Activated CD8-positive, alpha-beta memory T cell treated with anti-CD3 and anti-CD28 coated beads, Interleukin-2, amount 10 ng/mL, durations not matched to agents 7 days and 5 days (primary cell): ENCODE measurements at regions of chr19 and their contacts with region 1.

Region 1: GRCh38 chr19:15101479-15102082 is 5.6 kb upstream of the SYDE1 start:
- DNase-seq: peak; percentile 72
- ATAC-seq: peak; percentile 64
- H3K4me3 Mint-ChIP-seq: no peak overlapping the region
- H3K27ac Mint-ChIP-seq: no peak overlapping the region
- H3K4me1 Mint-ChIP-seq: peaks cover under 1% of the 10 kb centered on the region
- H3K27me3 Mint-ChIP-seq: peaks cover 13% of the 10 kb centered on the region

Region 2: GRCh38 chr19:15154002-15154612 is 52.5 kb after region 1 on chr19:
- CTCF ChIA-PET with region 1: interaction called, 22 read pairs
- DNase-seq: peak; percentile 55
- ATAC-seq: no peak
- H3K4me3 Mint-ChIP-seq: no peak overlapping the region
- H3K27ac Mint-ChIP-seq: no peak overlapping the region
- H3K4me1 Mint-ChIP-seq: no peaks in the 10 kb centered on the region
- H3K27me3 Mint-ChIP-seq: peaks cover 8% of the 10 kb centered on the region

Region 3: GRCh38 chr19:15234043-15234873 is 132.7 kb after region 1 on chr19:
- CTCF ChIA-PET with region 1: no interaction called
- DNase-seq: no peak
- ATAC-seq: no peak
- H3K4me3 Mint-ChIP-seq: no peak overlapping the region
- H3K27ac Mint-ChIP-seq: no peak overlapping the region
- H3K4me1 Mint-ChIP-seq: peaks cover 12% of the 10 kb centered on the region
- H3K27me3 Mint-ChIP-seq: peaks cover 34% of the 10 kb centered on the region